ENCODE measurements at regions of chr14 and their contacts with region 1.

Region 1: GRCh38 chr14:101809671-101810514 is 48.4 kb downstream of the PPP2R5C start:
- DNase-seq: peak; percentile 78 to 96
- ATAC-seq: peak; percentile 95 to 96
- H3K4me3 ChIP-seq: peak overlapping the region; percentile 59
- H3K27ac ChIP-seq: peak overlapping the region; percentile 83 to 92
- H3K4me1 ChIP-seq: peaks cover 51% of the 10 kb centered on the region
- CTCF ChIP-seq: no peak
- EP300 ChIP-seq: no peak
- POLR2A ChIP-seq: peak; percentile 45
- RAD21 ChIP-seq: no peak

Region 2: GRCh38 chr14:101019990-101020710 is 789.7 kb before region 1 on chr14:
- CTCF ChIA-PET with region 1: no interaction called
- POLR2A ChIA-PET with region 1: no interaction called
- DNase-seq: no peak
- ATAC-seq: no peak
- H3K4me3 ChIP-seq: no peak overlapping the region
- H3K27ac ChIP-seq: no peak overlapping the region
- H3K4me1 ChIP-seq: no peaks in the 10 kb centered on the region
- CTCF ChIP-seq: no peak
- EP300 ChIP-seq: no peak
- POLR2A ChIP-seq: no peak
- RAD21 ChIP-seq: no peak

Region 3: DNA sequence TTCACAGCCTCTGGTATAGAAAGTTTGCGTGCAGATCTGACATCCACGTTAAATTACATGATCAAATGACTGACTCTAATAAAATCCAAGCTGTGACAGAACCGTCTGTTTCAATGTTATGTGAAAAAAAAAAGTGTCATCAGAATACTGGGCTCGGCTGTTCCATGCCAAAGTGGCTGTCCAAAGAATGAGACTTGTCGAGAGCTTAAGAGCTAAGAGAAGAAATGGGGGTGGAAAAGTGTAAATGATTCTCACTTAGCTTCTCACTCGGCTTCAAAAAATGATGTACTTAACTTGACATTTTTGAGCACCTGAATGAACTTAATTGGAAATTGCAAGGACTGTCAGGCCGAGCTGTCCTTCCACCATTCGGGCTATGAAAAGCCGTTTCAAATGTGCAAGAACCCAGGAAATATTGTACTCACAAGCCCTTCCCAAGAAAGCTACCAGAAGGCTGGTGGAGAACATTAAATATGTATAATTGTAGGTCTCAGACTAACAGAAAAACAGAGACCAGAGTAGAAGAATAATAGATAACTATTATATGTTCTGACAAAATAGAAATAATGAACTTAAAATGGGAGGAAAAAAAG is 170.6 kb before region 1 on chr14:
- CTCF ChIA-PET with region 1: no interaction called
- POLR2A ChIA-PET with region 1: no interaction called
- DNase-seq: no peak
- ATAC-seq: no peak
- H3K4me3 ChIP-seq: no peak overlapping the region
- H3K27ac ChIP-seq: no peak overlapping the region
- H3K4me1 ChIP-seq: no peaks in the 10 kb centered on the region
- CTCF ChIP-seq: no peak
- EP300 ChIP-seq: no peak
- POLR2A ChIP-seq: no peak
- RAD21 ChIP-seq: no peak

Region 4: GRCh38 chr14:101761032-101761880 is 48.6 kb before region 1 on chr14 and contains the start of gene PPP2R5C:
- CTCF ChIA-PET with region 1: no interaction called
- POLR2A ChIA-PET with region 1: interaction called, 12 read pairs
- DNase-seq: peak; percentile 91 to 95
- ATAC-seq: peak; percentile 81 to 94
- H3K4me3 ChIP-seq: peak within 1 kb of the TSS; percentile 82
- H3K27ac ChIP-seq: peak within 1 kb of the TSS; percentile 77 to 93
- H3K4me1 ChIP-seq: peaks cover 8% of the 10 kb centered on the region; the same call in 1 of the 3 replicates
- CTCF ChIP-seq: no peak
- EP300 ChIP-seq: no peak
- POLR2A ChIP-seq: peak; percentile 43
- RAD21 ChIP-seq: no peak
- polyA plus RNA-seq, gene PPP2R5C: 133 and 150 TPM in 2 replicates

Region 5: DNA sequence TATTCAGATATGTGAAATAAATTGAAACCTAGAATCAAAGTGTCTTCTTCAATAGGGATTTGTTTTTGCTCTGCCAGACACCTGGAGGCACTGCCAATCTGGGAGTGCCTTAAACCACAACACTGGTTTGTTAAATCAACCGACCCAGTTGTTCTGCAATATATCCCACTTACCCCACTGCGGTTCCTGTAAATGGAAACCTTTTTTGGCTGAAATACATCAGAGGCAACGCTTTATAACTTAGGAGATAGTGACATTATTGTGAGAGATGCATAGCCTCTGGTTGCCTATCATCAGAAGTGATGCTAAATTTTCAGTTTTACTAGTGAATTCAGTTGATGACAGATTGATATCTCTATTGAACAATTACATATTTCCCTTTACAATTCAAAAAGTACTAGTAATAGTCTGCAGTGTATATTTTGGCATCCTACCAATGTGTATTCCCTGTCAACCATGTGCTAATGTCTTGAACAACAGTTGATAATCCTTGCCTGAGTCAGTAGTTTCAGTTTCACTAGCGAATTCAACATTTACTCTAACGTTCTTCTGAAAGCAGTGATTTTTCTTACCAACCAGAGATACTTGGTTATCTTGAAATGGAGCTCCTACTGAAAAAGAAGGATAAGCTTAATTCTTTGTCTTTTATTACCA is 17.8 kb before region 1 on chr14:
- CTCF ChIA-PET with region 1: interaction called, 3 read pairs
- POLR2A ChIA-PET with region 1: interaction called, 14 read pairs
- DNase-seq: no peak
- ATAC-seq: no peak
- H3K4me3 ChIP-seq: no peak overlapping the region
- H3K27ac ChIP-seq: no peak overlapping the region
- H3K4me1 ChIP-seq: no peaks in the 10 kb centered on the region; the same call in 2 of the 3 replicates
- CTCF ChIP-seq: no peak
- EP300 ChIP-seq: no peak
- POLR2A ChIP-seq: no peak
- RAD21 ChIP-seq: no peak

Region 6: DNA sequence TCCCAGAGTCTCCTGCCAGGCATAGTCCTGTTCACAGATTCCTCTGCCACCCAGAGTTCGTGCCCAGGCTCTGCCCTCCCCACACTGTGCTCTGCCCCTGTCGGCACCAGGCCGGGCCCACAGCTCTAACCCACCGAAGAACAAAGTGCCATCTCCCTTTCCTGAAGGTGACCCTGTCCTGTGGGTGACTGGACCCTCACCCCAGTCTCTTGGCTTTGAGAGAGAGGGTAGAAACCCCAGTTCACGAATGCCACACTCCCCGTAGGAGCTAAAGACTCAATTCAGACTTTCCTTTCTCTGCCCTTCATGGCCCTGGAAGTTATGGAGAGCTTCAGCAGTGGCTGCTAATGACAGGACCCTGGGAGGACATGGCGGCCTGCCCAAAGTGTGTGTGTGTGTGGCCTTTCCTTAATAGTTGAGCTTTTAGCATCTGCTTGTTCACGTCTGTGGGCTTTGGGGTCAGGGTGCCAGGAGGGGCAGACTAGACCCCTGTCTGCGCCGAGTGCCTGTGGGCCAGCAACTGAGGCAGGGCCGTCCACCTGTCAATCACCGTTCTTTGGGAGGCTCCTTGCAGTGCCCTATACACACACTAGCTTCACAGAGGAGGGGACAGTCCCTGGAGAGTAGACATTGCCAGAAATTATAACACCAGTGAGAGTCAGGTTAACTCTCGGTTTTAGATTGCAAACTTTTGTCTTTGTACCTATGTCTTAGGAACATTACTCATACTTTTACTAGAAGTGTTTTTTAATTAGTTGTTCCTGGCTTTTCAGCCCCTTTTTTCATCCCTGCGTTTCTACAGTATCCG is 69.8 kb after region 1 on chr14:
- CTCF ChIA-PET with region 1: no interaction called
- POLR2A ChIA-PET with region 1: no interaction called
- DNase-seq: no peak
- ATAC-seq: no peak
- H3K4me3 ChIP-seq: no peak overlapping the region
- H3K27ac ChIP-seq: no peak overlapping the region
- H3K4me1 ChIP-seq: peaks cover 18% of the 10 kb centered on the region
- CTCF ChIP-seq: no peak
- EP300 ChIP-seq: no peak
- POLR2A ChIP-seq: no peak
- RAD21 ChIP-seq: no peak

Region 7: DNA sequence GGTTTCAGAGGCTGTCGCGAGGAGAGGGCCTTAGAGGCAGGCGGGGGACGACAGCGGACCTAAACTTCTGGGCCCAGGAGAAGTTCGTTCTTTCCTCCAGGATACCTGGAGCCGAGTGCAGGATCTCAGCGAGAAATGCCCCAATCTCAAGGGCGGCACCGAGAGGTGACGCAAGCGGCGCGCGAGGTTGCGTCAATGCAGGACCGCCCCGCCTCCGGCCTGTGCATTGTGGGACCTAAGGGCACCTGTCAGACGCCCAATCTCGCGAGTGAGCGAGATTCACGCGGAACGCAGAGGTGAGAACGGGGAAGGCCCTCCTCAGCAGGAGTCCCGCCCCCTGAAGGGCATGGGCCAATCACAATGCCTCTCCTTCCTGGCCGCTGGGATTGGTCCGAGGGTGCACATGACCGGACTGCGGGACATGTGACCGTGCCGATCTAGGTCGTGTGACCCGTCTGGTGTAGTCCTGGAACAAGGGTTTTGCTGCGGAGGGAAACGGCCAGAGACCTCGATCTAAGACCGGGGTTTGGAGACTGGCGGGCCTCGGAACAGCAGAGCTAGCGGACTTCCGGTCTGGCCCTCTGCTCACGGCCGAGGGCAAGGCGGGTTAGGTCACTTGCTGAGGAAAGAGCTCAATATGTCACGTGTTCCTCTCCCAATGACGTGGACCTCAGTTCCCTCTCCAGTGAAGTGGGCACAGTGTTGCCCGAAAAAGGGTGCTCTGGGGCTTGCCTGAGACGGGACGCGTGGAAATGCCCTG is 138.2 kb after region 1 on chr14:
- CTCF ChIA-PET with region 1: no interaction called
- POLR2A ChIA-PET with region 1: interaction called, 13 read pairs
- DNase-seq: peak; percentile 98 to 100
- ATAC-seq: peak; percentile 98 to 99
- H3K4me3 ChIP-seq: peak overlapping the region; percentile 82
- H3K27ac ChIP-seq: peak overlapping the region; percentile 86 to 96
- H3K4me1 ChIP-seq: peaks cover 11% of the 10 kb centered on the region; the same call in 1 of the 3 replicates
- CTCF ChIP-seq: no peak
- EP300 ChIP-seq: no peak
- POLR2A ChIP-seq: peak; percentile 90
- RAD21 ChIP-seq: no peak

Region 8: DNA sequence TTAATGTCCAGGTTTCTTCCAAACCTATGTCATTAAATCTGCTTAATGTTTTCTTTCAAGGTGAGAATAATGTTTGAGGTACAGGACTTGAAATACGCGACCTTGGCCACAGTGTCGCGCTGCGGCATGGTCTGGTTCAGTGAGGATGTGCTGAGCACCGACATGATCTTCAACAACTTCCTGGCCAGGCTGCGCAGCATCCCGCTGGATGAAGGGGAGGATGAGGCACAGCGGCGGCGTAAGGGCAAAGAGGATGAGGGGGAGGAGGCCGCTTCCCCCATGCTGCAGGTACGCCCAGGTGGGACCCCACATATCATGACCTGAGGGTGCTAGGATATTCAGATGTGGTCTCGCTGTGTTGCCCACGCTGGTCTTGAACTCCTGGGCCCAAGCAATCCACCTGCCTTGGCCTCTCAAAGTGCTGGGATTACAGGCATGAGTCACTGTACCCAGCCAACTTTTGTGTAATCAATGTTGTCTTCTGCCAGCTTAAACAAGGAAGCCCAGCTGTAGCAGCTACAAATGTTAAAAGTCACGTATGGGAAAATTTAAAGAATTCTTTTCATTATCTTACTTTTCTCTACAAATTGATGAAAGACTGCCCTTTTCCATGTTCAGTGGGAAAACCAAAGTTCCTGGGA is 205.3 kb after region 1 on chr14:
- CTCF ChIA-PET with region 1: no interaction called
- POLR2A ChIA-PET with region 1: no interaction called
- DNase-seq: no peak
- ATAC-seq: no peak
- H3K4me3 ChIP-seq: no peak overlapping the region
- H3K27ac ChIP-seq: no peak overlapping the region
- H3K4me1 ChIP-seq: no peaks in the 10 kb centered on the region
- CTCF ChIP-seq: no peak
- EP300 ChIP-seq: no peak
- POLR2A ChIP-seq: no peak
- RAD21 ChIP-seq: no peak

Measured in A549 (cell line).